ENCODE measurements at regions of chr20 and their contacts with region 1.

Region 1: DNA sequence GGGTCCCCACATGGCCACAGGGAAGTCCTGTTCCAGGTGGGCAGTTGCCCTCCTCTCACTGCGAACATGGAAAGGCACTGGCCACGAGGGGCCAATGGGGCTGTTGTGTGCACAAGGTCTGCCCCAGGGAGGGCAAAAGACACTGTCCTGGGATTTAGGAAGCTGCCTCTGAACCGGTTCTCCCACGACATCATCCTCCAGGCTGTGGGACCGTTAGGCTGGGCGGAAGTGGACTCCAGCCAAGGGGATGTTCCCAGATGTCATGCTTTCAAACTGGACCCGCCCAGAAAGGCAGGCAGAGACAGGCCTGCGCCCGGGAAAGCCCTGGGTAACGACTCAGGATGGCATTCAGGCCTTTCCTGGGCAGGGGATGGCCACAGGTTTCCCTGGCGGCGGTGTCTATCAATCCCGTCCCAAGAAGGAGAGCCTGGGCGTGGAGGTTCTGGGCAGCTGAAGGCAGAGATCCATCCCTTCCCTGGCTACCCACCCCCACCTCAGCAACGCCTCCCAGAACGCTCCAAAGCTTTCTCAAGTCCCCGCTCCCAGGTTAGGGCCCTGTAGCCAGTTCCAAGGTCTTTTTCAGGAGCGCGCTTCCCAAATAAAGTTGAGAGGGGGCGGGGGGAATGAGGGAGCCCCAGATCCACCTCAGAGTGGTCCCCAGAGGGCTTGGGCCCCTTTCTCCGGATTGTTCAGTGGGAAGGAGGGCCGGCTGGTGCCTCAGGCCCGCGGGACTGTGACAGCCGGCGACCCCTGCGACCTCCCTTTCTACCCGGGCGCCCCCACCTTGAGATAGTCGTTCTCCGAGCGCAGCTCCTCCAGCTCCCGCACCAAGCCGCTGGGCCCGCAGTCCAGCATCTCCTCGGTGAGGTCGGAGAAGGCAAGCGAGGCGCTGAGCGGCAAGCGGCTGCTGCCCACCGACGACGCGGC is 13.8 kb upstream of the TLDC2 start:
- DNase-seq: peak; percentile 91 to 92
- ATAC-seq: peak; percentile 71
- H3K4me3 ChIP-seq: peak overlapping the region; percentile 78 to 84
- H3K27ac ChIP-seq: peak overlapping the region in 1 of 2 donors; percentile 14
- H3K4me1 ChIP-seq: no peaks in the 10 kb centered on the region
- H3K27me3 ChIP-seq: no peaks in the 10 kb centered on the region

Region 2: GRCh38 chr20:36460648-36461599 is 401.2 kb before region 1 on chr20:
- intact Hi-C with region 1: loop called in 1 of 2 experiments (anchors 10 kb)
- DNase-seq: peak; percentile 95 to 98
- ATAC-seq: peak; percentile 86
- H3K4me3 ChIP-seq: peak overlapping the region; percentile 84 to 97
- H3K27ac ChIP-seq: peak overlapping the region; percentile 90 to 93
- H3K4me1 ChIP-seq: peaks cover 0 to 5% of the 10 kb centered on the region in 2 donors
- H3K27me3 ChIP-seq: no peaks in the 10 kb centered on the region

Region 3: DNA sequence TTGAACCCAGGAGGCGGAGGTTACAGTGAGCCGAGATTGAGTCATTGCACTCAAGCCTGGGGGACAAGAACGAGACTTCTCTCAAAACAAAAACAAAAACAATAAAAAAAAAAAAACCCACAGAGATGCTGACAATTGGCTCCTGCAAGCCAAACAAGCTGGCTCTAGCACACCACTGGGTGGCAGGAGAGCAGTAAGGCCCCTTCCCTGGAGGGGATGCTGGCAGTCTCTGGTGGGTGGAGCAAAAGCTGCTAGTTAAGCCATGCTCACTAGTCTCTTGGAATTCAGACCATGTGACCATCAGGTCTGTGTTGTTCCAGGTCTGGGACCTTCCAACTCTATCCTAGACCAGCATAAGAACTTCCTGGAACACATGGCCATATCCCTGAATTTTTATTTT is 69.7 kb before region 1 on chr20:
- intact Hi-C with region 1: loop called in 1 of 2 experiments (anchors 5 kb)
- DNase-seq: peak; percentile 73 to 83
- ATAC-seq: peak; percentile 74
- H3K4me3 ChIP-seq: no peak overlapping the region
- H3K27ac ChIP-seq: no peak overlapping the region
- H3K4me1 ChIP-seq: no peaks in the 10 kb centered on the region
- H3K27me3 ChIP-seq: no peaks in the 10 kb centered on the region

Region 4: DNA sequence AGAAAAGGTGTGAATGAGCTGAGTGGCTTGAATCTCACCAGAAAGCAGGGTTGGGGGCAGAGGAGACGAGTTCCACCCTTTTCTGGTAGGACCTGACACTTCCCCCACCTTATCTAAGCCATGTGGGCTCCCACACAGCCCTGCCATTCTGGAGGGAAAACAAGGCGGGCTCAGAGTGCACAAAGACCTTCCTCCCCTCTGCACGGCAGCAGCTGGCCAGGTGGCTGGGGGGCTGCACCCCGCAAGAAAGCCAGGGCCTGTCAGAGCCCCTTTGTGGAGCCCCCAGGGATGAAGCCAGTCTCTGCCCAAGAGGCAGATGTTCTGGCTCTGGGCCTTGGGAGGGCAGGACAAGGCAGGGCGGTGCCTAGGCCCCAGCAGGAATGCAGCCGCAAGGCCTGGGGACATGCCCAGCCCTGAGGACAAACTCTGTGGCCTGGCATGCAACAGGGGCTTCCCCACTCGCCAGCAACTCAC is 40.1 kb before region 1 on chr20:
- intact Hi-C with region 1: loop called (anchors 5 kb)
- DNase-seq: no peak
- ATAC-seq: peak; percentile 27
- H3K4me3 ChIP-seq: no peak overlapping the region
- H3K27ac ChIP-seq: peak overlapping the region in 1 of 2 donors; percentile 34
- H3K4me1 ChIP-seq: peaks cover 6% of the 10 kb centered on the region in 2 donors
- H3K27me3 ChIP-seq: no peaks in the 10 kb centered on the region

Region 5: DNA sequence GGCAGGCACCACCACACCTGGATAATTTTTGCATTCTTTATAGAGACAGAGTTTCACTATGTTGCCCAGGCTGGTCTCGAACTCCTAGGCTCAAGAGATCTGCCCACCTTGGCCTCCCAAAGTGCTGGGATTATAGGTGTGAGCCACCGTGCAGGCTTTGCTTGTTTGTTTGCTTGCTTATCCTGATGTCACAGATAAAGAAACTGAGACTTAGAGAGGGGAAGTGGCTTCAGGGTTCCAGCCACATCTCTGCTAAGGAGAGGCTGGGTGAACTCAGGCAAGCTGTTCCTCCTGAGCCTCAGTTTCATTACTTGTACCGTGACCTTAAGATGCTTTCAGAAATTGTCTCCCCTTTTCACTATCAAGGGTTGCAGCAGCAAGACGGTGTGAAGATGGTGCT is 34.7 kb before region 1 on chr20:
- intact Hi-C with region 1: loop called (anchors 5 kb)
- DNase-seq: no peak
- ATAC-seq: no peak
- H3K4me3 ChIP-seq: no peak overlapping the region
- H3K27ac ChIP-seq: no peak overlapping the region
- H3K4me1 ChIP-seq: peaks cover 3 to 6% of the 10 kb centered on the region in 2 donors
- H3K27me3 ChIP-seq: no peaks in the 10 kb centered on the region